IMR-90 (cell line): ENCODE measurements at regions of chr7 and their contacts with region 1.

Region 1: GRCh38 chr7:2209146-2209960 is 23.4 kb downstream of the MAD1L1 start:
- DNase-seq: peak; percentile 68
- ATAC-seq: peak; percentile 94
- H3K4me3 ChIP-seq: no peak overlapping the region
- H3K27ac ChIP-seq: no peak overlapping the region
- H3K4me1 ChIP-seq: peaks cover 9% of the 10 kb centered on the region
- H3K27me3 ChIP-seq: no peaks in the 10 kb centered on the region
- CTCF ChIP-seq: peak; percentile 87
- POLR2A ChIP-seq: no peak
- RAD21 ChIP-seq: peak; percentile 96

Region 2: DNA sequence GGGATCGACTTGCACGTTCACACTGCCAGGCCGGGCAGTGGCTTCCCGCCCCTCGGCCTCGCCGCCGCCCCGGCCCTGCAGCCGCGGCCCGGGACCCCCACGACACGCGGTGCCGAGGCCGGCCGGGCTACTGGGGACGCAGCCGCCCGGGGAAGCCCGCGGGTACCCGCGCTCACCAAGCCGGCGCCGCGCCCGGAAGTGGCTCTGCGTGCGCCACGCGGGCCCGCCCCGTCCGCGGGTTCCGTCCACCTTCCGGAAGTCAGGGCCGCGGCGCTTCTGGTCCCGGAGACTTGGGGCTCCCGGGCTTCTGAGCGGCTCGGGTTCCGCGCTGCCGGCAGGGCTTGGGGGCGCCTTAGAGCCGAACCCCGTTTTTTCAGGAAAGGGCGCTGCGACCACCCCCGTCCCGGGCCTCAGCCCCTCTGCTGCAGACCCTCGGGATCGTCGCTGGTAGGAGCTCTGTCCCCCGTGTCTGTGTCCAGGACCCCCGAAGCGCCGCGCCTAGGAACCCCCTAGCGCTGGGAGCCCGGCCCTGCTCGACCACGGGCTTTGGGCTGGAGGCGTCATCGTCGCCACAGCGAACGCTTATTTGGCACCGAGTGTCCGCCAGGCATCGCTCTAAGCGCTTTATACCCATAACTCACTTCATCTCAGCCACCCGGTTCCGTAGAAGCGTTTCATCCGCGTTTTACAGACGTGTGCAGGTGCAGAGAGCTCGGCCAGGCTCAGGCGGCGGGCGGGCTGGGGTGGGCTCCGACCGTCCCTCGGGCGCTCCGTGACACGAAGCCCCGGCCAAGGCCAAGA is 639.3 kb before region 1 on chr7 and contains the start of gene PSMG3:
- CTCF ChIA-PET with region 1: no interaction called
- POLR2A ChIA-PET with region 1: no interaction called
- dilution Hi-C with region 1: no loop called
- in situ Hi-C with region 1: loop called (anchors 10 kb)
- intact Hi-C with region 1: no loop called
- DNase-seq: peak; percentile 89
- ATAC-seq: peak; percentile 87
- H3K4me3 ChIP-seq: peak within 1 kb of the TSS; percentile 92
- H3K27ac ChIP-seq: peak within 1 kb of the TSS; percentile 96
- H3K4me1 ChIP-seq: peaks cover 14% of the 10 kb centered on the region
- H3K27me3 ChIP-seq: no peaks in the 10 kb centered on the region
- CTCF ChIP-seq: peak; percentile 17; the same call in 1 of the 2 replicates
- POLR2A ChIP-seq: peak; percentile 75
- RAD21 ChIP-seq: no peak
- total RNA-seq, gene PSMG3: 30.6 and 37.3 TPM in 2 replicates

Region 3: DNA sequence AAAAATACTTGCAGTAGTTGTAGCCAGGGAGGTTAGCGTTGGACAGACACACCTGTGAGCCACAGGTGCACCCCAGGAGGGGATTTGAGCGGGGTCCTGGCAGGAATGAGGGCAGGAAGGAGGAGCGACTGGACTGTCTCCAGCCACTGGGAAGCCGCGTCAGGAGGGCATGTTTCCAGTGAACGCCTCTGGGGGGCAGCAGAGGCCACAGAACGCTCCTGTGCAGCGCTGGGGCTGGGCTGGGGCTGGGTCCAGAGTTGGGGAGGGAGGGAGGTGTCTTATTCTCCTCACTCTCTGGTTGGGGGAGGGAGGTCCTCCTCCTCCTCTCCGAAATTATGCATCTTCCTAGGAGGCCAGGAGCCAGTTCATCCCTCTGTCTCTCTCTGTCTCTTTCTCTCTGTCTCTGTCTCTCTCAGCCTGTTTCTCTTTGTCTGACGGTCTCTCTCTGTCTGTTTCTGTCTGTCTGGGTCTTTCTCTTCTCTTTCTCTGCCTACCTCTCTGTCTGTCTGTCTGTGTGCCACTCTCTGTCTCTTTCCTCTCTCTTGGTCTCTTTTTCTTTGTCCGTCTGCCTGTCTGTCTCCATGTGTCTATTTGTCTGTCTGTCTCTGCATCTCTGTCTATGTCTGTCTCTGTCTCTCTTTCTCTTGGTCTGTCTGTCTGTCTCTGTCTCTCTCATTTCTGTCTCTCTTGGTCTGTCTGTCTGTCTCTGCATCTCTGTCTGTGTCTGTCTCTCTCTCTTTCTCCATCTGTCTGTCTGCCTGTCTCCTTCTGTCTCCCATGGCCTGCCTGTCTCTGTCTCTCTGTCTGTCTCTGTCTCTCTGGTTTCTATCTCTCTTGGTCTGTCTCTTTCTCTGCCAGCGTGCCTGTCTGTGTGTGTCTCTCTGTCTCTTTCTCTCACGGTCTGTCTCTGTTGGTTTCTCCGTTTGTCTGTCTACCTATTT is 629.6 kb before region 1 on chr7:
- CTCF ChIA-PET with region 1: no interaction called
- POLR2A ChIA-PET with region 1: no interaction called
- dilution Hi-C with region 1: no loop called
- in situ Hi-C with region 1: loop called (anchors 10 kb)
- intact Hi-C with region 1: loop called (anchors 1 kb)
- DNase-seq: peak; percentile 32
- ATAC-seq: peak; percentile 99
- H3K4me3 ChIP-seq: no peak overlapping the region
- H3K27ac ChIP-seq: no peak overlapping the region
- H3K4me1 ChIP-seq: no peaks in the 10 kb centered on the region
- H3K27me3 ChIP-seq: no peaks in the 10 kb centered on the region
- CTCF ChIP-seq: peak; percentile 82
- POLR2A ChIP-seq: no peak
- RAD21 ChIP-seq: peak; percentile 91

Region 4: DNA sequence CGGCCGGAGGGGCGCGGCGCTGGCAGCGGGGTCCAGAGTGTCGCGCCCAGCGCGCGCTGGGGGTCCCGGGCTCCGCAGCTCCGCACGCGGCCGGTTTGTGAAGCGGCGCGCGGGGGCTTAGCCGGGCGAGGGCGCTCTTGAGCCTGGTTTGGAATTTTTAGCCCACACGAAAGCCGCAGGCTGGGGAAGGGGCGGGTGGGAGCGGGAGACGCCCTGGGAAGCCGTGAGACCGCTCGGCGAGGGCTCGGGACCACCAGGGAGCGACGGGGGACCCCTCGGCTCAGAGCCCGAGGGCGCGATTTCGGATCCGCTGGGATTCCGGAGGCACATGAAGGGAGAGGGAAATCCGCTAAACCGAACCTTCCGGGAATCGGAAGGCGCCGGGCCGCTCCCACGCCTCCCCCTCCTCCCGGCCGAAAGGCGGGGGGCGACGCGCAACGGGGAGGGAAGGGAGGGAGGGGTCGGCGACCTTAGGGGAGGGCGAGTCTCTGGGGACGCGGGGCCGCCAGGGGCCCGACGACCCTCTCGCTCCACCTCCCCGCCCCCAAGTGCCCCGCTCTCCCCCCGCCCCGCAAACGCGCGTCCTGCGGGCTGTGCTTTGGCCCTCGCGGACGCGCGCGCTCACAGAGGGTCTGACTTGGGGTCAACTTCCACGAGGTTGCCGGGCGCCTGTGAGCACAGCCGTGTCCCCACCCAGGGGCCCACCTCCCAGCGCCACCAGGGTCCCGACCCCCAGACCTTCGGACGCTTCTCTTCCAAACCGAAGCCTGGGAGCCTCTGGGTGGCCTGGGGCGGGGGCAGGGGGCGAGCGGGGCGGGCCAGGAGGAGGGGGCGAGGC is 544.4 kb before region 1 on chr7:
- CTCF ChIA-PET with region 1: no interaction called
- POLR2A ChIA-PET with region 1: no interaction called
- dilution Hi-C with region 1: no loop called
- in situ Hi-C with region 1: no loop called
- intact Hi-C with region 1: loop called (anchors 1 kb)
- DNase-seq: peak; percentile 41
- ATAC-seq: peak; percentile 50
- H3K4me3 ChIP-seq: peak overlapping the region; percentile 91
- H3K27ac ChIP-seq: no peak overlapping the region; the same call in 1 of the 2 replicates
- H3K4me1 ChIP-seq: peaks cover 2% of the 10 kb centered on the region; the same call in 1 of the 2 replicates
- H3K27me3 ChIP-seq: peaks cover 64% of the 10 kb centered on the region
- CTCF ChIP-seq: peak; percentile 94
- POLR2A ChIP-seq: no peak
- RAD21 ChIP-seq: peak; percentile 73

Region 5: DNA sequence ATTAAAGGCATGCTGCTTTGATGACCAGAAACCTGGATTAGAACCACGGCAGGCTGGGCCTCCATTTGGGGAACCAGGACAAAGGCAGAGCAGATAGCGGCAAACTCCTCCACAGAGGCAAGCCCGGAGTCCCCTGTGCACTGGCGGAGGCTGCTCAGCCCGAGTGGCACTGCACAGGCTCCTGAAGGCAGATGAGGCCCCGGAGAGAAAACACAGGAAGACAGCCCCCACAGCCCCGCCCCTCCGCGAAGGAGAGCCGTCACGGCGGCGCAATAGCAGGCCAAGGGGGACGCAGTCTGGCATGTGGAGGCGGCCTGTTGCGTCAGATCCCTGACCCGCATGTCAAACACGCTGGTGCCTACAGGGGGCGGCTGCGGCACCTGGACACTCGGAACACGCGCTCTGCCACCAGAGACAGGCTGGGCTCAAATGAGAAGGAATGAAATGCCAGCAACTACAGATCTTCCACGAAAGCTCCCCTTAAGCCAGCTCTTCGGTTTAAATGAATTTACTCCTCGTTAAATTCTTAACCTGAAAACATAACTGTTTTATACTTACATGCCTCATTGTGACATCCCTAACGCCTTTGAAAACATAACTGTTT is 105.1 kb before region 1 on chr7:
- CTCF ChIA-PET with region 1: no interaction called
- POLR2A ChIA-PET with region 1: no interaction called
- dilution Hi-C with region 1: no loop called
- in situ Hi-C with region 1: no loop called
- intact Hi-C with region 1: loop called (anchors 10 kb)
- DNase-seq: peak; percentile 93
- ATAC-seq: peak; percentile 83
- H3K4me3 ChIP-seq: no peak overlapping the region
- H3K27ac ChIP-seq: peak overlapping the region; percentile 36; the same call in 1 of the 2 replicates
- H3K4me1 ChIP-seq: peaks cover 35% of the 10 kb centered on the region
- H3K27me3 ChIP-seq: no peaks in the 10 kb centered on the region
- CTCF ChIP-seq: peak; percentile 76
- POLR2A ChIP-seq: peak; percentile 68
- RAD21 ChIP-seq: peak; percentile 57